Naive thymus-derived CD4-positive, alpha-beta T cell (primary cell): ENCODE measurements at regions of chr3 and their contacts with region 1.

Region 1: GRCh38 chr3:41961750-41962679 is at the start of gene ULK4:
- DNase-seq: peak; percentile 77 to 96 (median 94)
- ATAC-seq: peak; percentile 93
- H3K4me3 ChIP-seq: peak within 1 kb of the TSS; percentile 99
- H3K4me3 Mint-ChIP-seq: peak within 1 kb of the TSS; percentile 90 to 100 (median 98)
- H3K27ac ChIP-seq: peak within 1 kb of the TSS; percentile 83
- H3K27ac Mint-ChIP-seq: peak within 1 kb of the TSS; percentile 88 to 100 (median 96)
- H3K4me1 ChIP-seq: peaks cover 0 to 16% of the 10 kb centered on the region in 2 donors
- H3K4me1 Mint-ChIP-seq: peaks cover 8 to 22% (median 16%) of the 10 kb centered on the region in 7 donors
- H3K27me3 ChIP-seq: no peaks in the 10 kb centered on the region
- H3K27me3 Mint-ChIP-seq: peaks cover 0 to 3% (median 0%) of the 10 kb centered on the region in 5 donors
- total RNA-seq, gene ULK4: 14.0 to 22.3 (median 21.1) TPM

Region 2: DNA sequence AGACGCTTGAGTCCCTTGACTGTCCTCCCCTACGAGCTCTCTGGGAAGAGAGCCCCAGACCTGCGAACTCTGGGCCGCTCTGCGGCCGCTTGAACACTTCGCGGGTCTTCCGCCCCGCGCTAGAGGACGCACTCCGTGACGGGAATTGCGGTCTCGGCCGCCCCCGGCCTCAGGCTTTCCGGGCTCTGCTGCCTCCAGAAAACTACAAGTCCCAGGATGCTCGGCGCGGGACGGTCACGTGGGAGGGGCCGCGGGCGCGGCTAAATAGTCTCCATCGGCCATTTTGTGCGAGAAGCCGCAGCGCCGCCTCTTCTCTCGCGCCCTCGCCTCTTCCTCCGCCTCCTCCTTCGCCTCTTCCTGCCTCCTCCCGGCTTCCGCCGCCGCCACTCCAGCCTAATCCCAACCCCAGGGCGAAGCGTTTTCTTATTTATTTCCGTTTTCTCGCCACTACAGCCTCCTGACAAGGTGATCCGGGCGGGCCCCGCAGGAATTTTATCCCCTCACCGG is 1652.5 kb before region 1 on chr3 and contains the start of gene EIF1B:
- CTCF ChIA-PET with region 1: no interaction called
- POLR2A ChIA-PET with region 1: interaction called, 3 read pairs
- intact Hi-C with region 1: loop called (anchors 1 kb)
- DNase-seq: peak; percentile 95 to 99 (median 98)
- ATAC-seq: peak; percentile 97
- H3K4me3 ChIP-seq: peak within 1 kb of the TSS; percentile 80
- H3K4me3 Mint-ChIP-seq: peak within 1 kb of the TSS; percentile 92 to 100 (median 99)
- H3K27ac ChIP-seq: peak within 1 kb of the TSS; percentile 99
- H3K27ac Mint-ChIP-seq: peak within 1 kb of the TSS; percentile 97 to 100 (median 99)
- H3K4me1 ChIP-seq: peaks cover 5 to 16% of the 10 kb centered on the region in 2 donors
- H3K4me1 Mint-ChIP-seq: peaks cover 5 to 44% (median 30%) of the 10 kb centered on the region in 7 donors
- H3K27me3 ChIP-seq: no peaks in the 10 kb centered on the region
- H3K27me3 Mint-ChIP-seq: no peaks in the 10 kb centered on the region
- total RNA-seq, gene EIF1B: 34.5 to 82.0 (median 53.3) TPM

Region 3: DNA sequence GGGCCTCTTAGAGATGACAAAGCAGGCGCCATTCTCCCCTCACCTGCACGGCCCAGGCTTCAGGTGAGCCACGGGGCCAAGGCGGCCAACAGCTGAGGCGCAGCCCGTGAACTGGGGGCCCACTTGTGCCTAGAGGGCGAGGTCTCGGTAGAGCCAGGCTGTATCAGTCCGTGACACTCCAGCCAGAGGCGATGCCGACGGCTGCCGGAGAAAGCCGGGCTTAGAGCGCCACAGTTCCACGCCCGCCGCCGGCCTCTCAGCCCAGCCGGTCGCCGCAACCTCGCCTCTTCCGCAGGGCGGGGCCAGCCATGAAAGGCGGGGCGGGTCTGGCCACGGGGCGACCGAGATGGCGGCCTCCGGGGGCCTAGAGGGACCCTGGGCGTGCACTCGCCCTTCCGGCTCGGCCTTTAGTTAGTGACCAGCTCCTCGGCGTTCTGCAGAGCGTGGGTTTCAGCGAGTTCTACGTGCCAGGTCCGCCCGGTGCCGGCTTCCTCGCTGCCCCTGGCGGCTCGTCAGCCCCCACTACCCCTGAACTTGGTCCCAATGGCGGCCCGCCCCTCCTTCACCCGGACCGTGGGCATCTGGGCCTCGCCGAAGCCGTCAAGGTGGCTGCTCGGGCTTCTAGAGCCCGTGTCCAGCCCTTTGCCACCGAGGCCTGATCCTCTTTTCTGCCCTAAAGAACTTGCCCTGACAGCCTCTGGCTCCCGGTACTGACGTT is 1437.3 kb before region 1 on chr3 and contains the start of gene ZNF621:
- CTCF ChIA-PET with region 1: no interaction called
- POLR2A ChIA-PET with region 1: no interaction called
- intact Hi-C with region 1: loop called (anchors 2 kb)
- DNase-seq: peak; percentile 43 to 90 (median 73)
- ATAC-seq: peak; percentile 99
- H3K4me3 ChIP-seq: peak within 1 kb of the TSS; percentile 69
- H3K4me3 Mint-ChIP-seq: peak within 1 kb of the TSS; percentile 85 to 97 (median 96)
- H3K27ac ChIP-seq: peak within 1 kb of the TSS; percentile 81
- H3K27ac Mint-ChIP-seq: peak within 1 kb of the TSS; percentile 91 to 98 (median 97)
- H3K4me1 ChIP-seq: peaks cover 0 to 15% of the 10 kb centered on the region in 2 donors
- H3K4me1 Mint-ChIP-seq: peaks cover 17 to 39% (median 27%) of the 10 kb centered on the region in 7 donors
- H3K27me3 ChIP-seq: no peaks in the 10 kb centered on the region
- H3K27me3 Mint-ChIP-seq: no peaks in the 10 kb centered on the region
- total RNA-seq, gene ZNF621: 14.6 to 26.9 (median 21.9) TPM

Region 4: DNA sequence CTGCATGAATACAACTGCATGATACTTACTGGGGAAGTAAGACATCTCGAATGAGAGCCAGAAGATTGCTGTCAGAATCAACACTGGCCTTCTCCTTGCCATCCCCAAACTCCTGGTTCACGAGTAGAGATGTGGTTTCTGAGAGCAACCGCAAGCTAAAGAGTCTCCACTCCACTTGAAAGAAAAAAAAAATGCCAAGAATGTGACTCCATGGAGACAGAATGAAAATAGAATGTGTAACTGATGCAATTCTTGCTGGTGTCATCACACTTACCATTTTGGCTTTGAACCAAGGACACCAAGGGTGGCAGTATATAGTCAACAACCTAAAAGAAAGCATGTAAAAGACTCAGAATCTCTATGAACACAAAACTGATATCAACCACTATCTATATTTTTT is 280.5 kb before region 1 on chr3:
- CTCF ChIA-PET with region 1: no interaction called
- POLR2A ChIA-PET with region 1: no interaction called
- intact Hi-C with region 1: no loop called
- DNase-seq: no peak
- ATAC-seq: no peak
- H3K4me3 ChIP-seq: no peak overlapping the region
- H3K4me3 Mint-ChIP-seq: no peak overlapping the region
- H3K27ac ChIP-seq: no peak overlapping the region
- H3K27ac Mint-ChIP-seq: no peak overlapping the region
- H3K4me1 ChIP-seq: no peaks in the 10 kb centered on the region
- H3K4me1 Mint-ChIP-seq: no peaks in the 10 kb centered on the region
- H3K27me3 ChIP-seq: no peaks in the 10 kb centered on the region
- H3K27me3 Mint-ChIP-seq: no peaks in the 10 kb centered on the region

Region 5: GRCh38 chr3:41943311-41943843 is 18.6 kb before region 1 on chr3:
- CTCF ChIA-PET with region 1: no interaction called
- POLR2A ChIA-PET with region 1: no interaction called
- intact Hi-C with region 1: no loop called
- DNase-seq: no peak
- ATAC-seq: no peak
- H3K4me3 ChIP-seq: no peak overlapping the region
- H3K4me3 Mint-ChIP-seq: no peak overlapping the region
- H3K27ac ChIP-seq: no peak overlapping the region
- H3K27ac Mint-ChIP-seq: no peak overlapping the region
- H3K4me1 ChIP-seq: no peaks in the 10 kb centered on the region
- H3K4me1 Mint-ChIP-seq: peaks cover 0 to 11% (median 0%) of the 10 kb centered on the region in 7 donors
- H3K27me3 ChIP-seq: no peaks in the 10 kb centered on the region
- H3K27me3 Mint-ChIP-seq: no peaks in the 10 kb centered on the region

Region 6: DNA sequence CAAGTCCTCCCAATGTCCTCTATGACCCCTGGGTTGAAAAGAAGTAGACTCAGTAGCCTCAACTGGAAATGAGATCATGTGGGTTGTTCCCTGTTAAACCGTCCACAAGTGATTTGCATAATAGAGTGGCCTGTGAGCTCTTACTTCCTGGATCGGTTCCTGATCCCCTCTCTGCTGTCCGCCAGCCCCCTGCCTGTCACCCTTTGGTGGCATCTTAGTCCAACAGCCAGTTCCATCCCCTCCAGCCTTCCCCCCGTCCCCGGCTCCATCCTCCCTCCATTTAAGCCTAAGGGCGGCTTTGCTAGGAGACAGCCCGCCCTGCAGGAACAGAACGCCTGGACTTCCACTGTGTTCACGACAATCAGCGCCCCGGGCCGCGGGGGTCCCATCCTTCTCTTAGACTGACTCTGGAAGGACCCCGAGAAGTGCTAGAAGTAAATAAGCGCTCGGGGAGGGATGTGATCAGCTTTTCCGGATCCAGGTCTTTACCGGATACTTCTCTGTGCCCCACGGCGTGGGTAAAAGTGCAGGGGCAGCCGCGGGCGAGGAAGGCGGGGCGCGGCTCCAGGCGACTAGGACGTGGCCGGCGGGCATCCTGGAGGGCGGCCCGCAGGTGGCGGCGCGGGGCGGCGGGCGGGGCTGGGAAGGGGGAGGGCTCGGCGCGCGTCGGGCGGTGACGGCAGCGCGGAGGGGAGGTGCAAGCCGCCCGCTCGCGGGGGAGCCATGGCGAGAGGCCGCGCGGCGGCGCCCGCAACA is 51.1 kb after region 1 on chr3:
- CTCF ChIA-PET with region 1: no interaction called
- POLR2A ChIA-PET with region 1: interaction called, 12 read pairs
- intact Hi-C with region 1: loop called (anchors 1 kb)
- DNase-seq: peak; percentile 36 to 65 (median 58)
- ATAC-seq: peak; percentile 88
- H3K4me3 ChIP-seq: peak overlapping the region; percentile 78
- H3K4me3 Mint-ChIP-seq: peak overlapping the region; percentile 86 to 95 (median 90)
- H3K27ac ChIP-seq: peak overlapping the region; percentile 78
- H3K27ac Mint-ChIP-seq: peak overlapping the region; percentile 84 to 98 (median 93)
- H3K4me1 ChIP-seq: peaks cover 10 to 15% of the 10 kb centered on the region in 2 donors
- H3K4me1 Mint-ChIP-seq: peaks cover 19 to 39% (median 37%) of the 10 kb centered on the region in 7 donors
- H3K27me3 ChIP-seq: no peaks in the 10 kb centered on the region
- H3K27me3 Mint-ChIP-seq: no peaks in the 10 kb centered on the region

Region 7: DNA sequence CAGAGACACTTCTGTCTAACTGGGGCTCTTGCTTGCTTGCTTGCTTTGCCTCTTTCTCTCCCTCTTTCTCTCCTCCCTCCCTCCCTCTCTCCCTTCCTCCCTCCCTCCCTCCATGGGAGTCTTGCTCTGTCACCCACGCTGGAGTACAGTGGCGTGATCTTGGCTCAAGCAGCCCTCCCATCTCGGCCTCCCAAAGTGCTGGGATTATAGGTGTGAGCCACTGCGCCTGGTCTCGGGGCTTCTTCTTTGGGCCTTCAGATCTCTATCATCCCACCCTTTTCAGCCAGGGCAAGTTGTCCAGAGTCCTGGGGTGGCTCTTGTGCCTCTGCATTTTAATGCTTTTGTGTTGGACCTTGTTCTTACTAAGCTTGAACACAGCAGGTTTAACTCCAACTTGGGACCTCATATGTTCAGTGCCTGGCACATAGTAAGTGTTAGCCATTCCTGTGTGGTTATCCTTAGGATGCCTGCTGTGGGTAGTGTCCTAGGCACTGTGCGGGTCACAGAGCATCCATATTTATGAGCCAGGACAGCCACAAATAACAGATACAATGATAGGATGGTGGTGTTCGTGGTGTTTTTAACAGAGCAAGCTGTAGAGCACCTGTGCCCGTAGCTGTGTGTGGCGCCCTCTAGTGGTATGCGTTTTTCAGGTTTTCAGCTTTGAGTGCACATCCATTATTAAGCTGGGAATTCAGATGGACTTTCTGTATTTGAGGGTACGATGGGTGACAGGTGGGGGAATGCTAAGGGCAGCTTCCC is 228.9 kb after region 1 on chr3:
- CTCF ChIA-PET with region 1: no interaction called
- POLR2A ChIA-PET with region 1: no interaction called
- intact Hi-C with region 1: loop called in 1 of 2 experiments (anchors 2 kb)
- DNase-seq: peak; percentile 30 to 70 (median 57)
- ATAC-seq: peak; percentile 75
- H3K4me3 ChIP-seq: no peak overlapping the region
- H3K4me3 Mint-ChIP-seq: no peak overlapping the region
- H3K27ac ChIP-seq: no peak overlapping the region
- H3K27ac Mint-ChIP-seq: peak overlapping the region in 5 of 9 donors; percentile 22 to 69 (median 25)
- H3K4me1 ChIP-seq: peaks cover 5 to 9% of the 10 kb centered on the region in 2 donors
- H3K4me1 Mint-ChIP-seq: peaks cover 8 to 38% (median 15%) of the 10 kb centered on the region in 7 donors
- H3K27me3 ChIP-seq: no peaks in the 10 kb centered on the region
- H3K27me3 Mint-ChIP-seq: no peaks in the 10 kb centered on the region

Region 8: DNA sequence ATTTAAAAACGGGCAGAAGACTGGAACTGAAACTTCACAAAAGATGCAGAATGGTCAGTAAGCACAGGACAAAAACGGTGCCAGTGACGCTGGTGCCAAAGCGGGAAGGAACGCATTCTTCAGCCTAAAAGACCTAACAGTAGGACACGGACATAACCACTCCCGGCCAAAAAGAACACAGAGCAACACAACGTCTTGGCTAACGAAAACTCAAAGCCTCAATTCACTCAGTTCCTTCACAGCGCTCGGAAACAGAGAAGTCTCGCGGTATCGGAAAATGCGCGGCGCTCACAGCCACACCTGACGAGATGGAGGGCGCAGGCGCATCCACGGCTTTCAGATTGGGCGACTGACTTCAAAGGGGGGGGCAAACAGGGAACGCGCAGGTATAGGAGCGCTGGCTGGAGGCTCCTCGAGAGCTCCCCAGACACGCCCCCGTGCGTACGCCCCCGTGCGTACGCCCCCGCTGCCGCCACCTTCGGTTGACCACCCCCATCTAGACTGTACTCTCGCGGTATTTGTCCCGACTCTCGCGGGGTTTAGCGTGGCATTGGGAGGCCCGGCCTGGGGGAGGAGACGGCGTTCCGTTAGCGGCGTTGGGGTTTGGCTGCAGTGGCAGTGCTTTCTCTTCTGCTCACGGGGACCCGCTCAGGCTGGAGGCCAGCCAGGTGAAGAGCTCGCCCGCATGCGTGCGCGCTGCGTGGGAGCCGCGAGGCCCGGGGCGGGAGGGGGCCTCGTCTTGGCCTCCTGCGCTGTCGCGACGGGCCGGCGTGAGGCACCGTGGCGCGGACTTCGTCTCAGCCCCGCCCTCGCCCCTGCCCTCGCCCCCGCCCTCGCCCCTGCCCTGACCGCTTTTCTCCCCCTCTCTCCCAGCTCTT is 638.3 kb after region 1 on chr3 and contains the start of gene NKTR:
- CTCF ChIA-PET with region 1: no interaction called
- POLR2A ChIA-PET with region 1: no interaction called
- intact Hi-C with region 1: loop called in 1 of 2 experiments (anchors 5 kb)
- DNase-seq: peak; percentile 98 to 100 (median 100)
- ATAC-seq: peak; percentile 97
- H3K4me3 ChIP-seq: peak within 1 kb of the TSS; percentile 75
- H3K4me3 Mint-ChIP-seq: peak within 1 kb of the TSS; percentile 91 to 98 (median 95)
- H3K27ac ChIP-seq: peak within 1 kb of the TSS; percentile 93
- H3K27ac Mint-ChIP-seq: peak within 1 kb of the TSS; percentile 95 to 99 (median 98)
- H3K4me1 ChIP-seq: peaks cover 11 to 25% of the 10 kb centered on the region in 2 donors
- H3K4me1 Mint-ChIP-seq: peaks cover 26 to 53% (median 43%) of the 10 kb centered on the region in 7 donors
- H3K27me3 ChIP-seq: no peaks in the 10 kb centered on the region
- H3K27me3 Mint-ChIP-seq: peaks cover 0 to 2% (median 0%) of the 10 kb centered on the region in 5 donors
- total RNA-seq, gene NKTR: 110 to 275 (median 238) TPM